OCI-LY7 (cell line): ENCODE measurements at regions of chr20 and their contacts with region 1.

Region 1: GRCh38 chr20:43710370-43711044 is 16.3 kb downstream of the GTSF1L start:
- DNase-seq: peak; percentile 92
- H3K4me3 ChIP-seq: peak overlapping the region; percentile 46
- H3K27ac ChIP-seq: peak overlapping the region; percentile 98
- H3K4me1 ChIP-seq: peaks cover 61% of the 10 kb centered on the region
- CTCF ChIP-seq: 0 out of 2 replicates have a peak, but pooled peaks have one; percentile 24

Region 2: DNA sequence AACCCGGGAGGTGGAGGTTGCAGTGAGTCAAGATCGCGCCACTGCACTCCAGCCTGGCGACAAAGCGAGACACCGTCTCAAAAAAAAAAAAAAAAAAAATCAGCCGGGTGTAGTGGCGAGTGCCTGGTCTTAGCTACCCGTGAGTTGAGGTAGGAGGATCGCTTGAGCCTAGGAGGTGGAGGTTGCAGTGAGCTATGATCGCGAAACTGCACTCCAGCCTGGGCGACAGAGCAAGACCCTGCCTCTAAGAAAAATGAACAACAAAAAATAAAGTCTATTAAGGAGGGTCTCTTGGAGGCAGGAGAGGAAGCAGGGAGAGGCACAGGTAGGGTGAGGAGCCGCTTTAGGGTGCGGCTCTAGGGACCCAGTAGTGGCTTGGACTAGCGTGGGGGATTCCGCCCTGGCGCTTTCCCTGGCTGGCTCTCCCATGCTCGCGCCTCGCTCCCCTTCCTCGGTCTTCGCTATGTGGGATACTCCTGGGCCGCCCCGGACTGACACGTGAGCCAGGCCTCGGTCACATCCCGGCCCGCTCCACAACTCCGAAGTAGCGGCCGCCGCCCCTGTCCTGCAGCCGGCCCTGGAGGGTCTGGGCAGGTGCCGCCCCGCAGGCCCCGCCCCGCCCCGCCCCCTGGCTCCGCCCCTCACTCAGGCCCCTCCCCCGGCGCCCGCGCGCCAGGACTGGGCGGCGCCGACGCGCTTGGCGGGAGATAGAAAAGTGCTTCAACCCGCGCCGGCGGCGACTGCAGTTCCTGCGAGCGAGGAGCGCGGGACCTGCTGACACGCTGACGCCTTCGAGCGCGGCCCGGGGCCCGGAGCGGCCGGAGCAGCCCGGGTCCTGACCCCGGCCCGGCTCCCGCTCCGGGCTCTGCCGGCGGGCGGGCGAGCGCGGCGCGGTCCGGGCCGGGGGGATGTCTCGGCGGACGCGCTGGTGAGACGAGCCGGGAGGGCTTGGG is 43.9 kb before region 1 on chr20 and contains the start of gene MYBL2:
- CTCF ChIA-PET with region 1: no interaction called
- POLR2A ChIA-PET with region 1: interaction called, 7 read pairs
- intact Hi-C with region 1: loop called (anchors 2 kb)
- DNase-seq: peak; percentile 92
- H3K4me3 ChIP-seq: peak within 1 kb of the TSS; percentile 96
- H3K27ac ChIP-seq: peak within 1 kb of the TSS; percentile 85
- H3K4me1 ChIP-seq: peaks cover 61% of the 10 kb centered on the region
- CTCF ChIP-seq: no peak
- total RNA-seq, gene MYBL2: 226 and 268 TPM in 2 replicates

Region 3: GRCh38 chr20:43681468-43681942 is 29.0 kb before region 1 on chr20:
- CTCF ChIA-PET with region 1: interaction called, 3 read pairs
- POLR2A ChIA-PET with region 1: interaction called, 4 read pairs
- intact Hi-C with region 1: loop called (anchors 1 kb)
- DNase-seq: peak; percentile 82
- H3K4me3 ChIP-seq: peak overlapping the region; percentile 59
- H3K27ac ChIP-seq: peak overlapping the region; percentile 97
- H3K4me1 ChIP-seq: peaks cover 76% of the 10 kb centered on the region
- CTCF ChIP-seq: peak; percentile 61

Region 4: GRCh38 chr20:43721429-43722152 is 11.1 kb after region 1 on chr20:
- CTCF ChIA-PET with region 1: no interaction called
- POLR2A ChIA-PET with region 1: interaction called, 4 read pairs
- intact Hi-C with region 1: loop called (anchors 1 kb)
- DNase-seq: peak; percentile 75
- H3K4me3 ChIP-seq: peak overlapping the region; percentile 42
- H3K27ac ChIP-seq: peak overlapping the region; percentile 84
- H3K4me1 ChIP-seq: peaks cover 67% of the 10 kb centered on the region
- CTCF ChIP-seq: no peak

Region 5: GRCh38 chr20:43749734-43750294 is 39.3 kb after region 1 on chr20:
- CTCF ChIA-PET with region 1: no interaction called
- POLR2A ChIA-PET with region 1: interaction called, 3 read pairs
- intact Hi-C with region 1: loop called (anchors 1 kb)
- DNase-seq: peak; percentile 73
- H3K4me3 ChIP-seq: no peak overlapping the region
- H3K27ac ChIP-seq: no peak overlapping the region
- H3K4me1 ChIP-seq: peaks cover 51% of the 10 kb centered on the region
- CTCF ChIP-seq: peak; percentile 98

Region 6: GRCh38 chr20:43824309-43825050 is 114.0 kb after region 1 on chr20:
- CTCF ChIA-PET with region 1: no interaction called
- POLR2A ChIA-PET with region 1: no interaction called
- intact Hi-C with region 1: no loop called
- DNase-seq: no peak
- H3K4me3 ChIP-seq: no peak overlapping the region
- H3K27ac ChIP-seq: no peak overlapping the region
- H3K4me1 ChIP-seq: peaks cover 10% of the 10 kb centered on the region
- CTCF ChIP-seq: no peak